ENCODE measurements at regions of chr19 and their contacts with region 1.

Region 1: DNA sequence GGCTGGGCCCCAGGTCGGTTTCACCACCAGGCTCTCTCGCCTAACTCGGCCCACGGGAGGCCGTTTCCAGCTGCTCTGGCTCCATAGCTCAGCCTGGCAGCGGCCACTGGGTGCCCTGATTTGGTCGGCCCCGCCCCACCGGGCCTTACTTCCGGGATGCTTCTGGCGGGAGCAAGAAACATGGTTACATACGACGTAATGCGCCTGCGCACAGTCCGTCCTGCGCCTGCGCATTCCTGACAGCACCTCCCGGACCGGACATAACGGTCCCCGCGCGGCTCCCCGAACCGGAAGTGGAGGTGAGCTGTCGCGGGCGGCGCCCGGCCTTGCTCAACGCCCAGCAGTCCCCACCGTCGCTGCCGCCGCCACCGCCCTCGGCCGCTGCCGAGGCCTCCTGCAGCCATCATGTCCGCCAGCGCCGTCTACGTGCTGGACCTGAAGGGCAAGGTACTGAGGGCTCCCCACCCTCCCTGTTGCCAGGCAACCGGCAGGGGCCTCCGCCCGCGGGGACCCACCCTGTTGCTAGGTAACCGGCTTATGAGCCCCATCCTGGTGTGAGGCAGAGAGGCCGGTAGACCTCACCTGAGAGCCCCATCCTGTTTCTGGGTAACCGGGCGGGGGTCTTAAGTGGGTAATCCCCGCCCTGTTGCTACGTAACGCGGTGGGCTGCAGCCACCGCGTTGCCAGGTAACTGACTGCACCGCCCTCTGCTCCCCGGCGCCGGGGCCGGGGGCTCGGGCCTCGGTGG is at the start of gene AP1M1:
- DNase-seq: peak; percentile 99
- ATAC-seq: peak; percentile 87
- H3K4me3 ChIP-seq: peak within 1 kb of the TSS; percentile 86
- H3K27ac ChIP-seq: peak within 1 kb of the TSS; percentile 88
- H3K4me1 ChIP-seq: peaks cover 28% of the 10 kb centered on the region
- H3K27me3 ChIP-seq: no peaks in the 10 kb centered on the region
- CTCF ChIP-seq: no peak
- total RNA-seq, gene AP1M1: 104 and 109 TPM in 2 replicates

Region 2: GRCh38 chr19:15769585-15769984 is 428.2 kb before region 1 on chr19:
- CTCF ChIA-PET with region 1: no interaction called
- POLR2A ChIA-PET with region 1: no interaction called
- intact Hi-C with region 1: no loop called
- DNase-seq: peak; percentile 13
- ATAC-seq: no peak
- H3K4me3 ChIP-seq: no peak overlapping the region
- H3K27ac ChIP-seq: no peak overlapping the region
- H3K4me1 ChIP-seq: no peaks in the 10 kb centered on the region
- H3K27me3 ChIP-seq: peaks cover 20% of the 10 kb centered on the region; the same call in 1 of the 2 replicates
- CTCF ChIP-seq: no peak

Region 3: GRCh38 chr19:16088351-16089009 is 109.3 kb before region 1 on chr19:
- CTCF ChIA-PET with region 1: no interaction called
- POLR2A ChIA-PET with region 1: interaction called, 22 read pairs
- intact Hi-C with region 1: no loop called
- DNase-seq: no peak
- ATAC-seq: no peak
- H3K4me3 ChIP-seq: no peak overlapping the region
- H3K27ac ChIP-seq: no peak overlapping the region
- H3K4me1 ChIP-seq: peaks cover 7% of the 10 kb centered on the region
- H3K27me3 ChIP-seq: no peaks in the 10 kb centered on the region
- CTCF ChIP-seq: peak; percentile 42

Region 4: GRCh38 chr19:16509141-16510061 is 311.6 kb after region 1 on chr19:
- CTCF ChIA-PET with region 1: no interaction called
- POLR2A ChIA-PET with region 1: no interaction called
- intact Hi-C with region 1: no loop called
- DNase-seq: no peak
- ATAC-seq: no peak
- H3K4me3 ChIP-seq: no peak overlapping the region
- H3K27ac ChIP-seq: no peak overlapping the region
- H3K4me1 ChIP-seq: no peaks in the 10 kb centered on the region
- H3K27me3 ChIP-seq: no peaks in the 10 kb centered on the region
- CTCF ChIP-seq: no peak

Measured in PC-3 (cell line).